Heart left ventricle (tissue), 16 donors: ENCODE measurements at regions of chr3 and their contacts with region 1.

Region 1: GRCh38 chr3:186930641-186931531 is 560 bp downstream of the ST6GAL1 start:
- DNase-seq: peak; percentile 79 to 90 (median 86)
- ATAC-seq: peak; percentile 83 to 89 (median 86)
- H3K4me3 ChIP-seq: peak overlapping the region; percentile 75 to 98 (median 84)
- H3K27ac ChIP-seq: peak overlapping the region; percentile 81 to 97 (median 93)
- H3K4me1 ChIP-seq: peaks cover 5 to 50% (median 39%) of the 10 kb centered on the region in 12 donors
- H3K27me3 ChIP-seq: no peaks in the 10 kb centered on the region
- CTCF ChIP-seq: peak in 8 of 12 donors; percentile 11 to 34 (median 22)
- POLR2A ChIP-seq: peak in 1 of 2 donors; percentile 49

Region 2: GRCh38 chr3:186821429-186822367 is 109.2 kb before region 1 on chr3:
- intact Hi-C with region 1: no loop called
- DNase-seq: no peak
- ATAC-seq: peak in 1 of 4 donors; percentile 47
- H3K4me3 ChIP-seq: no peak overlapping the region
- H3K27ac ChIP-seq: no peak overlapping the region
- H3K4me1 ChIP-seq: peaks cover 0 to 15% (median 5%) of the 10 kb centered on the region in 12 donors
- H3K27me3 ChIP-seq: peaks cover 0 to 34% (median 9%) of the 10 kb centered on the region in 9 donors
- CTCF ChIP-seq: peak; percentile 52 to 77 (median 66)
- POLR2A ChIP-seq: no peak

Region 3: DNA sequence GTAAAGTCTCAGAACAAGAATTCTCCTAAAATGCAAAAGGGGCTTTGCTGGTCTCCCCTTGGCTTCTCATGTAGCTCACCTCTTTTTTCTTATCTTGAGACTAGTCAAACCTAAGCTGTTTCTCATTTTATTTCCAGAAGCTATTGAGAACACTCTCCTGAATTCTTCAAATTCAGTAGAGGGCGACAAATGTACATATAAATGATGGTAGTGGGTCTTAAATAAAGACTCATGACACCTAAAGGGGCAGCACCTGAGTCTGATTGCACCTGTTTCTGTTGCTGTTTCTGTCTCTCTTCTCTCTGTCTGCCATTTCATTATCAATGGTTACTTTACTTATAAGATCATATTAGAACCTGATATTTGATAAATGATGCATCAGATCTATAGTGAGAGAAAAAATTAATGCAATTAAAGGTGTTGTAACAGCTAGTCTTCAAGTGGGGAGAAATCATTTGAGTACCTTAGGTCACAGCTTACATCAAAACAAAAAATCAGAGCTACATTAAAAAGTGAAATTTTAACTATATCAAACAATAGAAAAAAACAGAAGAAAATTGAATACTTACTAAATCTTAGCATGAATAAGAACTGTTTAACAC is 81.4 kb before region 1 on chr3:
- intact Hi-C with region 1: loop called in 9 of 10 experiments (anchors 2 to 10 kb)
- DNase-seq: no peak
- ATAC-seq: peak in 3 of 4 donors; percentile 50 to 76 (median 68)
- H3K4me3 ChIP-seq: no peak overlapping the region
- H3K27ac ChIP-seq: no peak overlapping the region
- H3K4me1 ChIP-seq: no peaks in the 10 kb centered on the region
- H3K27me3 ChIP-seq: peaks cover 0 to 5% (median 0%) of the 10 kb centered on the region in 9 donors
- CTCF ChIP-seq: peak; percentile 23 to 73 (median 61)
- POLR2A ChIP-seq: no peak

Region 4: DNA sequence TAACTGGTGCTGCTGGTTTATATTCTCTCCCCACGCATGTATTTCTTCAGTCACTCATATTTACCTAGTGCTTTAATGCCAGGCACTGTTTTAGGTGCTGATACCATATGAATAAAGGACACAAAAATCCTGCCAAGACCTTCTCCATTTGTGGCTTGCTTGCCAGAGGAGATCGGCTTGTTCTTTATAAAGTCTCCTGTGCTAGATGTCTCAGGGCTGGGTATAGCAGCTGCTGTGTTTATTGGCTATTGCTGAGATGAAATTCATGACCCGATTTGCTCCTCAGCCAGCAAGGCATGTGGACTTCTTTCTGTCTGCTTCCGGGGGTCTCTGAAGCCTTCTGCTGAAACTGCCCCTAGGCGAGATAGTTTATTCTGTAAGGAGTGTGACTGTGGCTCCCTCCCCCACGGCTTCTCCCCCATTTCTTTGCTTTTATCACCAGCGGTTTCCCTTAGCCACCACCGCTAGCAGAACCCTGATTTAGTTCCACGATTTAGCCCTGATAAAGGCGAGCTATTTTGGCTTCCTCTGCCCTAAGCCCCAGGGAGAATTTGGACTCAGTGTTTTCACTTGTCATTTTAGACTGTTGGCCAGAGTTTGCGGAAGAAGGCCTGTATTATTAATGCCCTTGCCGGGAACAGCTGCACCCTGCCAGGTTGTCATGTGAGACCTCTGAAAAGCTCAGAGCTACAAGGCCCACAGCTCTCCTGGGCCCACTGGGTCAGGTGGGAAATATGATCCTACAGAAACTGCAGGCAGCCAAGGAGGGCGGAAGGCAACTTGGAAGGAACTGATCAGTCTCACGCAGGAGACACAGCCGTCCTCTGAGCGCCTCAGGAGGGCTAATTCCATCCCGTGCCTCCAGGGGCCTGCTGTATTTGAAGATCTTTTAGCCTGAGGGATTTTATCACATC is 46.2 kb after region 1 on chr3:
- intact Hi-C with region 1: loop called in 9 of 10 experiments (anchors 2 to 5 kb)
- DNase-seq: peak; percentile 68 to 90 (median 80)
- ATAC-seq: peak; percentile 85 to 92 (median 88)
- H3K4me3 ChIP-seq: peak overlapping the region in 8 of 12 donors; percentile 1 to 28 (median 19)
- H3K27ac ChIP-seq: peak overlapping the region; percentile 80 to 93 (median 90)
- H3K4me1 ChIP-seq: peaks cover 15 to 78% (median 39%) of the 10 kb centered on the region in 12 donors
- H3K27me3 ChIP-seq: no peaks in the 10 kb centered on the region
- CTCF ChIP-seq: peak in 7 of 12 donors; percentile 4 to 19 (median 13)
- POLR2A ChIP-seq: no peak

Region 5: DNA sequence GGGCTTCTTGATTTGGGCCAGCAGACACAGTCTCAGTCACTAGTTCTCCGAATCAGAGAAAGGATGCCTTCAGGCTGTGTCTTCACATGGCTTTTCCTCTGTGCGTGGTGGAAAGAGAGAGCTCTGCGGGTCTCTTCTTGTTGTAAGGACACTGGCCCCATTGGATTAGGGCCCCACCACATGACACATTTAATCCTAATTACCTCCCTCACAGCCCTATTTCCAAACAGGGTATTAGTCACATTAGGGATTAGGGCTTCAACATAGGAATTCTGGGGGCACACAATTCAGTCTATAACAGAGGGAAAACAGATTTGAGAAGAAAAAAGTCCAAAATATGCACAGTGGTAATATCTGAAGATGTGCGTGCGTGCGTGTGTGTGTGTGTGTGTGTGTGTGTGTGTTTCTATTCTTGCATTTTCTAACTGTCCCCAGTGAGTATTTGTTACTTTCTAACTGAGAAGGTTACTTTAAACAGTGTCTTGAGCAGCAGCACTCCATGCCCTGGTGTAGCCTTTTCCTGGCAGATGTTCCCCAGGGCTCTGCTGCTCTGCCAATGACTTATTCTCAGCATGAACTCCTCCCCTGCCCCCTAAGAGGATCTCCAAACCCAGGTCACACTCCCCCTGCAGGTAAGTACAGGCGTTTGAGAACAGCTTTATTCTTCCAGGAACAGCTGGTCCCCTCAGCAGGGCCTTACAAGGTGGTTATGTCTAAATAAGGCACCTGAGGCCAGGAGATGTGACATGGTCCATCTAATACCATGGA is 135.5 kb after region 1 on chr3:
- intact Hi-C with region 1: loop called in 2 of 10 experiments (anchors 2 to 10 kb)
- DNase-seq: peak in 2 of 5 donors; percentile 34 to 55
- ATAC-seq: peak in 3 of 4 donors; percentile 62 to 84 (median 66)
- H3K4me3 ChIP-seq: no peak overlapping the region
- H3K27ac ChIP-seq: no peak overlapping the region
- H3K4me1 ChIP-seq: peaks cover 0 to 36% (median 14%) of the 10 kb centered on the region in 12 donors
- H3K27me3 ChIP-seq: no peaks in the 10 kb centered on the region
- CTCF ChIP-seq: peak in 8 of 12 donors; percentile 9 to 45 (median 21)
- POLR2A ChIP-seq: no peak

Region 6: DNA sequence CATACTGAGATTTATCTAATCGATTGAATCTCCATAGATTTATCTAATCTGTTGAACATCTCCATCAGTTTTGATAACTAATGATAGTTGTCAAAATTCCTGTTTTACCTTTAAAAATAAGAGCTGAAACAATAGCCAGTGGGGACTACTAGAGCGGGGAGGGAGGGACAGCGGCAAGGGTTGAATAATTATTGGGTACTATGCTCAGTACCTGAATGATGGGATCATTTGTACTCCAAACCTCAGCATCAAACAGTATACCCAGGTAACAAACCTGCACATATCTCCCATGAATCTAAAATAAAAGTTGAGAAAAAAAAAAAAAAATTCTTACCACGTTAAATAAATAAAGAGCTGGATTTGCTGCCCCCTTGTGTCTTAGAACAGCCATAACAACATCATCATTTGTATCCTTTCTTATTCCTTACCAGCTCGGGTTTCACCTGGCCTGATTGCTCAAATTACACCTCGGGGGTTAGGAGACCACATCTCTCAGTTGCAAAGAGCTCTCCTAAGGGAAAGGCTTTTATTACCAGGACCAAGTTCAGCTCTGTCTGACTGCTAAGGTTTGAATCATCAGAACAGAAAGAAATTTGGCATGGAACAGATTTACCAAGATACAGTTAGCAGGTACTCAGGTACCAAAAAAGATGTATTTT is 234.1 kb after region 1 on chr3:
- intact Hi-C with region 1: loop called in 3 of 10 experiments (anchors 2 to 10 kb)
- DNase-seq: peak in 1 of 5 donors; percentile 31
- ATAC-seq: peak in 3 of 4 donors; percentile 18 to 45 (median 35)
- H3K4me3 ChIP-seq: no peak overlapping the region
- H3K27ac ChIP-seq: no peak overlapping the region
- H3K4me1 ChIP-seq: peaks cover 0 to 25% (median 6%) of the 10 kb centered on the region in 12 donors
- H3K27me3 ChIP-seq: no peaks in the 10 kb centered on the region
- CTCF ChIP-seq: peak; percentile 54 to 87 (median 77)
- POLR2A ChIP-seq: no peak